ENCODE measurements at regions of chr14 and their contacts with region 1.

Region 1: GRCh38 chr14:24734878-24735500 is 101.0 kb upstream of the GZMB start:
- DNase-seq: peak; percentile 69
- ATAC-seq: peak; percentile 63
- H3K4me3 ChIP-seq: no peak overlapping the region
- H3K27ac ChIP-seq: no peak overlapping the region
- H3K4me1 ChIP-seq: no peaks in the 10 kb centered on the region
- H3K27me3 ChIP-seq: no peaks in the 10 kb centered on the region
- CTCF ChIP-seq: peak; percentile 77
- POLR2A ChIP-seq: no peak
- RAD21 ChIP-seq: peak; percentile 75

Region 2: DNA sequence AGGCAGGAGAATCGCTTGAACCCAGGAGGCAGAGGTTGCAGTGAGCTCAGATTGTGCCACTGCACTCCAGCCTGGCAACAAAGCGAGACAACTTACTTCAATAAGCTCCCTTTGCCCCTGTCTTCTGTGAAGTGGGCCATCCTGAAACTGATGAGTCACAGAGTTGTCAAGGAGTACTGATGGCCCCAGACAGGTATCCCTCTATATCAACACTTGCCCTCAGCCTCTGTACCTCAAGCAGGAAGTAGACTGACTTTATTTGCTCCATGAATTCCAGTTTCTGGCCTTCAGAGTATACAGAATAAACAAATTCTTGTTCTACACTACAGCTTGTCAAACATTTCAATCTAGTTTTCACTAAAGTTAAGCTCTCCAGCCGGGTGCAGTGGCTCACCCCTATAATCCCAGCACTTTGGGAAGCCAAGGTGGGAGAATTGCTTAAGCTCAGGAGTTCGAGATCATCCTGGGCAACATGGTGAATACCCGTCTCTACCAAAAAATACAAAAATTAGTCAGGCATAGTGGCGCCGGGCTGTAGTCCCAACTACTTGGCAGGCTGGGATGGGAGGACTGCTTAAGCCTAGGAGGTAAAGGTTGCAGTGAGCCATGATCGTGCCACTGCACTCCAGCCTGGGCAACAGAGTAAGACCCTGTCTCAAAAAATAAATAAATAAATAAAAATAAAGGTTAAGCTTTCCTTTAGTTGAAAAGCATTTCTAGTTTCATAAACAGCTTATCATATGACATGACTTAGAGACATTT is 1879.8 kb before region 1 on chr14:
- CTCF ChIA-PET with region 1: no interaction called
- POLR2A ChIA-PET with region 1: no interaction called
- dilution Hi-C with region 1: no loop called
- in situ Hi-C with region 1: no loop called
- intact Hi-C with region 1: no loop called
- DNase-seq: no peak
- ATAC-seq: no peak
- H3K4me3 ChIP-seq: no peak overlapping the region
- H3K27ac ChIP-seq: no peak overlapping the region
- H3K4me1 ChIP-seq: peaks cover 18% of the 10 kb centered on the region
- H3K27me3 ChIP-seq: no peaks in the 10 kb centered on the region
- CTCF ChIP-seq: no peak
- POLR2A ChIP-seq: no peak
- RAD21 ChIP-seq: no peak

Region 3: DNA sequence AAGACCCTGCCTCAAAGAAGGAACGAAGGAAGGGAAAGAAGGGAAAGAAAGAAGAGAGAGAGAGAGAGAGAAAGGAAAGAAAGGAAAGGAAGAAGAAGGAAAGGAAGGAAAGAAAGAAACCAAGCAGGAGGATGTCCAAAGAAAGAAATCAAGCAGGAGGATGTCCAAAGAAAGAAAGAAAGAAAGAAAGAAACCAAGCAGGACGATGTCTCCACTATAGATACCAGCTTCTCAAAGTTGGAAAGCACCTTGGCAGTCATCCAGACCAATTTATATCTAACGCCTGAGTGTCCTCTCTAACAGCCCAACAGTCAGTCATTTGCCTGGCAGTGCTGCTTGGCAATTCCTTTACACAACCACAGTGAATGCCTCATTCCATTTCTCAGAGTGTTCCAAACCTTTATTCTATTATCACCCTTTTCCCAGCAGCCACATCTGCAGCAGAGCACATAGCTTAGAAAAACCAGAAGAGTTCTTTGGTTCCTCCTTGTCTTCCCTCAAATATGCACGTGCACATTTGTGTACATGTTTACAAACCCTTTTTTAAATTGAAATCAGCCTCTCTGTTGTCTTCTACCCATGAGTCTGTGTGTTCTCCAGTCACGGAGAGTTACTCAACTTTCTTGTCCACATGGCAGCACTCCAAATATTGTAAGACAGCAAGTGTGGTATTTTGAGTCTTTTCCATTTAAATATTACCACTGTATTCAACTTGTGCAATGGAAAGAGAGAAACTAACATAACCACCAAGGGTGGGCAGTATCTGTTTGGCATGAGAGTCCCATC is 176.5 kb after region 1 on chr14:
- CTCF ChIA-PET with region 1: no interaction called
- POLR2A ChIA-PET with region 1: no interaction called
- dilution Hi-C with region 1: no loop called
- in situ Hi-C with region 1: no loop called
- intact Hi-C with region 1: no loop called
- DNase-seq: peak; percentile 82
- ATAC-seq: peak; percentile 77
- H3K4me3 ChIP-seq: peak overlapping the region; percentile 31; the same call in 1 of the 2 replicates
- H3K27ac ChIP-seq: peak overlapping the region; percentile 46; the same call in 1 of the 2 replicates
- H3K4me1 ChIP-seq: peaks cover 4% of the 10 kb centered on the region; the same call in 1 of the 2 replicates
- H3K27me3 ChIP-seq: no peaks in the 10 kb centered on the region
- CTCF ChIP-seq: no peak
- POLR2A ChIP-seq: no peak
- RAD21 ChIP-seq: no peak

Region 4: GRCh38 chr14:25042362-25043299 is 307.6 kb after region 1 on chr14:
- CTCF ChIA-PET with region 1: interaction called, 3 read pairs
- POLR2A ChIA-PET with region 1: no interaction called
- dilution Hi-C with region 1: no loop called
- in situ Hi-C with region 1: no loop called
- intact Hi-C with region 1: loop called (anchors 1 kb)
- DNase-seq: peak; percentile 68
- ATAC-seq: peak; percentile 51
- H3K4me3 ChIP-seq: no peak overlapping the region
- H3K27ac ChIP-seq: no peak overlapping the region
- H3K4me1 ChIP-seq: no peaks in the 10 kb centered on the region
- H3K27me3 ChIP-seq: no peaks in the 10 kb centered on the region
- CTCF ChIP-seq: peak; percentile 54
- POLR2A ChIP-seq: no peak
- RAD21 ChIP-seq: peak; percentile 77

Region 5: GRCh38 chr14:25132732-25133422 is 397.9 kb after region 1 on chr14:
- CTCF ChIA-PET with region 1: no interaction called
- POLR2A ChIA-PET with region 1: no interaction called
- dilution Hi-C with region 1: no loop called
- in situ Hi-C with region 1: no loop called
- intact Hi-C with region 1: loop called (anchors 1 kb)
- DNase-seq: peak; percentile 55
- ATAC-seq: peak; percentile 100
- H3K4me3 ChIP-seq: no peak overlapping the region
- H3K27ac ChIP-seq: no peak overlapping the region
- H3K4me1 ChIP-seq: no peaks in the 10 kb centered on the region
- H3K27me3 ChIP-seq: peaks cover 16% of the 10 kb centered on the region
- CTCF ChIP-seq: peak; percentile 81
- POLR2A ChIP-seq: no peak
- RAD21 ChIP-seq: peak; percentile 86

Region 6: DNA sequence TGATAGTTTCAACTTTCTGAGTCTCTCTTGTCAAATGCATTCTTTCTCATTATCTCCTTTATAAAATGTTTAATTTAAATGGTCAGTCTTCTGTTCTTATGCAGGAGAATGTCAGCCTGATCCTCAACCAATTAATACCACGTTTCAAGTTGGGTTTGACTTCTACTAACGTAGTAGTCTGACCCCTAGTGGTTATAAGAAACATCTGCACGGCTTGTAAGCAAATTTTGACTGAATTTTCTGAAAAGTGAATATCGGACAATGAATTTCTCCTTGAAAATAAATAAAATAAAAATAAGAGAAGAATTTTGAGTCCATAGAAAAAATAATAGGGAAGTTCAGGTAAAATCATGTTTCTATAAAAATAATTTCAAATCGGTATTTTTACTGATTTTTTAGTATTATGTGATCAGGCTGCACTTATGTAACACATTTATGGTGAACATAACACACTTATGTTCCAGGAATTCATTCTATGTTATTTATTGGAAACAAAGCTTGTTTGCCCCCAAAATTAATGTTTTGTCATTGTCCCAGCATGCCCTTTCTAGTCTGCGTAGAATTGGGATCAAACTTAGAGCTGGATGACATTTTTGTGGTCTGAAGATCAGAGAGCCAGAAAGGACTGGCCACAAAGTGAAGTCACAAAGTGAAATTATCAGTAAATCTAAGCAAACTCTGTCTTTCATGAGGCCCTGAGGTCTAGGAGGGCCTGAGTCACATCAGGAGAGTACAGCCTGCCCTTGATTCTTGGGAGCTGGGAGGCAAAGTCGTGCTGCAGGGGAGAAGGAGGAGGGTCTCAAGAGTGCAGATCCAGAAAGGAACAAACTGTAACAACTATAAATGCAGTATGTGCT is 416.2 kb after region 1 on chr14:
- CTCF ChIA-PET with region 1: interaction called, 3 read pairs
- POLR2A ChIA-PET with region 1: no interaction called
- dilution Hi-C with region 1: no loop called
- in situ Hi-C with region 1: loop called (anchors 5 kb)
- intact Hi-C with region 1: loop called (anchors 1 kb)
- DNase-seq: peak; percentile 71
- ATAC-seq: peak; percentile 82
- H3K4me3 ChIP-seq: no peak overlapping the region
- H3K27ac ChIP-seq: no peak overlapping the region
- H3K4me1 ChIP-seq: no peaks in the 10 kb centered on the region
- H3K27me3 ChIP-seq: peaks cover 1% of the 10 kb centered on the region
- CTCF ChIP-seq: peak; percentile 78
- POLR2A ChIP-seq: no peak
- RAD21 ChIP-seq: peak; percentile 76

Region 7: DNA sequence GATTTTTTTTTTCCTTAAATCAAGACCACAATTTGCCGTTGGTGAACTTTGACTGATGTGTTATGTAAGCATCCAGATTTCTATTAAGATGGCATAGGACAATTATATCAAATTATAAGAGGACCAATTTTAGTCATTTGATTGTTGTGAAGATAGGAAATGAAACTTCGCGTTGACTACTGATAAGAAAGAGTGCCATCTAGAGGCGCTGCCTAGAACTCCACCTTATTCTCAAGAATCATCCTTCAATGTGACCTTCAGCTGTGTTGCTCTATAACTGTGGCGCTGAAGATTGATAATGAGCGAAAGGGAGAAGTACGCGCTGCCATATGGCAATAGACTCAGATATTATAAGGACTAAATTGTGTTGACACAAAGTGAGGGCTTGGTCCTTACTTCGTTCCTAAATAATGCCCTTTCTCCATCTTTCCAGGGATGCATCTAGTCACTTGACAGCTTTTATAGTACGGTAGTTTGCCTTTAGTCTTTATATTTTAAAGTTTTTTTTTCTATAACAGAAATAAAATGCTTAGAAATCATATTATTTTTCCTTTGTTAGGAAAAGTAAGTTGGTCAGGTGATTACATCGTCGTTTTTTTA is 665.7 kb after region 1 on chr14:
- CTCF ChIA-PET with region 1: interaction called, 3 read pairs
- POLR2A ChIA-PET with region 1: no interaction called
- dilution Hi-C with region 1: no loop called
- in situ Hi-C with region 1: loop called (anchors 25 kb)
- intact Hi-C with region 1: loop called (anchors 1 kb)
- DNase-seq: peak; percentile 29
- ATAC-seq: peak; percentile 57; the same call in 1 of the 2 replicates
- H3K4me3 ChIP-seq: no peak overlapping the region
- H3K27ac ChIP-seq: no peak overlapping the region
- H3K4me1 ChIP-seq: no peaks in the 10 kb centered on the region
- H3K27me3 ChIP-seq: no peaks in the 10 kb centered on the region
- CTCF ChIP-seq: peak; percentile 69
- POLR2A ChIP-seq: no peak
- RAD21 ChIP-seq: peak; percentile 52